IMR-90 (cell line): ENCODE measurements at regions of chr7 and their contacts with region 1.

Region 1: GRCh38 chr7:80859272-80859970 is 59.4 kb downstream of the SEMA3C start:
- DNase-seq: peak; percentile 48
- ATAC-seq: peak; percentile 72
- H3K4me3 ChIP-seq: no peak overlapping the region
- H3K27ac ChIP-seq: no peak overlapping the region
- H3K4me1 ChIP-seq: peaks cover 8% of the 10 kb centered on the region
- H3K27me3 ChIP-seq: no peaks in the 10 kb centered on the region
- CTCF ChIP-seq: no peak
- POLR2A ChIP-seq: no peak
- RAD21 ChIP-seq: no peak

Region 2: GRCh38 chr7:80847027-80847426 is 12.4 kb before region 1 on chr7:
- CTCF ChIA-PET with region 1: no interaction called
- POLR2A ChIA-PET with region 1: no interaction called
- dilution Hi-C with region 1: no loop called
- in situ Hi-C with region 1: no loop called
- intact Hi-C with region 1: no loop called
- DNase-seq: peak; percentile 34
- ATAC-seq: no peak
- H3K4me3 ChIP-seq: no peak overlapping the region
- H3K27ac ChIP-seq: no peak overlapping the region
- H3K4me1 ChIP-seq: peaks cover 9% of the 10 kb centered on the region
- H3K27me3 ChIP-seq: no peaks in the 10 kb centered on the region
- CTCF ChIP-seq: no peak
- POLR2A ChIP-seq: no peak
- RAD21 ChIP-seq: no peak

Region 3: DNA sequence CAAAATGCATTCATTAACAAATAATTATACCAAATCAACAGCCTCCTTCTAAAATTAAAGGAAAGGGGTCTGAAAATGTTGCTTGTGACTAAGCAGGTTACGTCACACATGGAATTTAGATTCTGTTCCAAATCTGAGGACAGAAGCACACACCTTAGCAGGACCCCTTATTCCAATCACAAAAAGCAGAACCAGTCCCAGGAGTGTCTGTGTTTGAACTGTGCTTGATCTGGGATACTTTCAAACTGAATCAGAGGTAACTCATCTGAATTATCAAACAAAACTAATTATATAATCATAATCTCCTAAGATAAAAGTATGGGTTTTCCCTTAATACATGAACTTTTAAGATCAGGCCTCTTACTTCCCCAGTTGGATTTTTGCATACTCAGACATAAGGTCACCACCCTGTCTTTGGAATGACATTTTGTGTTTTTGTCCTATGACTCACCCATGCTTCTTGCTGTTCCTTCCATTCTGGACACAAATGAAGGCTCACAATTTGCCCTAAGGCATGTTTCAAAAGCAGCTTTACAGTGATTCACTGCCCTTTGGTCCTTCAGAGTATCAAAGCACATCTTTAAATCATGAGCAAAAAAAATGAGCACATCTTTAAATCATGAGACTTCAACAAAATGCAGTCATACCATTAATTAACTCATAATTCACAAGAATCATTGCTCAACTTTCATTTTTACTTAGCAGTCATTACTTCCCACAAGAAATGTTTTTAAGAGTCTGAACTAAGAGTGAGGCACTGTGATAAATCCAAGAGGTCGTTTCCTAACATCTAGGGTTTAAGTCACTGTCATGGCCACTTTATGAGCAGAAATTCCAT is 24.0 kb after region 1 on chr7:
- CTCF ChIA-PET with region 1: no interaction called
- POLR2A ChIA-PET with region 1: no interaction called
- dilution Hi-C with region 1: no loop called
- in situ Hi-C with region 1: no loop called
- intact Hi-C with region 1: loop called (anchors 2 kb)
- DNase-seq: peak; percentile 98
- ATAC-seq: peak; percentile 90
- H3K4me3 ChIP-seq: no peak overlapping the region
- H3K27ac ChIP-seq: no peak overlapping the region
- H3K4me1 ChIP-seq: peaks cover 8% of the 10 kb centered on the region
- H3K27me3 ChIP-seq: no peaks in the 10 kb centered on the region
- CTCF ChIP-seq: no peak
- POLR2A ChIP-seq: no peak
- RAD21 ChIP-seq: no peak